Panc1 (cell line): ENCODE measurements at regions of chr18 and their contacts with region 1.

Region 1: DNA sequence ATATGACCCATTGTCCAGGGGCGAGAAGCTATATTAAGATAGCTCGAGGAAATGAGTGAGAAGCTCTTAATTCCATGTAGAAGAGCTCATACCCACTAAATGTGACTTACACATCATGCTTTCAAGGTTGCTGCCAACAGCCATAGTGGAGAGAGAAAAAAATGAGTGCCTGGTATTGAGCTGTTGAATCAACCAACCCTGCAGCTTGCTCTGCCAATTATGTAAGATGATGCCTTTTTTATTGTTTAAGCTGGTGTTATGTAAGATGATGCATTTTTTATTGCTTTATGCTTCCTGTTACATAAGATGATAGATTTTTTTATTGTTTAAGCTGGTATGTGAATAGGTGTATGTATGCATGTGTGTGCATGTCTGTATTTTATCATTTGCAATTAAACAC is 228.2 kb downstream of the CCDC178 start:
- DNase-seq: no peak
- ATAC-seq: no peak
- H3K4me3 ChIP-seq: no peak overlapping the region
- H3K27ac ChIP-seq: no peak overlapping the region
- H3K4me1 ChIP-seq: no peaks in the 10 kb centered on the region
- H3K27me3 ChIP-seq: no peaks in the 10 kb centered on the region
- CTCF ChIP-seq: no peak

Region 2: GRCh38 chr18:33146014-33146413 is 66.3 kb before region 1 on chr18:
- CTCF ChIA-PET with region 1: no interaction called
- POLR2A ChIA-PET with region 1: no interaction called
- in situ Hi-C with region 1: no loop called
- intact Hi-C with region 1: no loop called
- DNase-seq: no peak
- ATAC-seq: no peak
- H3K4me3 ChIP-seq: no peak overlapping the region
- H3K27ac ChIP-seq: no peak overlapping the region
- H3K4me1 ChIP-seq: no peaks in the 10 kb centered on the region
- H3K27me3 ChIP-seq: no peaks in the 10 kb centered on the region
- CTCF ChIP-seq: no peak

Region 3: GRCh38 chr18:33350256-33350655 is 137.9 kb after region 1 on chr18:
- CTCF ChIA-PET with region 1: no interaction called
- POLR2A ChIA-PET with region 1: interaction called, 12 read pairs
- in situ Hi-C with region 1: no loop called
- intact Hi-C with region 1: no loop called
- DNase-seq: no peak
- ATAC-seq: no peak
- H3K4me3 ChIP-seq: no peak overlapping the region
- H3K27ac ChIP-seq: no peak overlapping the region
- H3K4me1 ChIP-seq: no peaks in the 10 kb centered on the region
- H3K27me3 ChIP-seq: no peaks in the 10 kb centered on the region
- CTCF ChIP-seq: no peak